CD8-positive, alpha-beta memory T cell (primary cell): ENCODE measurements at regions of chr1 and their contacts with region 1.

Region 1: GRCh38 chr1:15592285-15592684 is 7.4 kb upstream of the AGMAT start:
- DNase-seq: no peak
- H3K4me3 ChIP-seq: no peak overlapping the region
- H3K4me3 Mint-ChIP-seq: no peak overlapping the region
- H3K27ac ChIP-seq: no peak overlapping the region
- H3K27ac Mint-ChIP-seq: no peak overlapping the region
- H3K4me1 ChIP-seq: no peaks in the 10 kb centered on the region
- H3K4me1 Mint-ChIP-seq: peaks cover 0 to 3% (median 0%) of the 10 kb centered on the region in 3 donors
- H3K27me3 ChIP-seq: peaks cover 5% of the 10 kb centered on the region
- H3K27me3 Mint-ChIP-seq: no peaks in the 10 kb centered on the region

Region 2: GRCh38 chr1:15501208-15502032 is 90.9 kb before region 1 on chr1:
- CTCF ChIA-PET with region 1: no interaction called
- POLR2A ChIA-PET with region 1: no interaction called
- DNase-seq: peak in 2 of 5 donors; percentile 16 to 24
- H3K4me3 ChIP-seq: no peak overlapping the region
- H3K4me3 Mint-ChIP-seq: no peak overlapping the region
- H3K27ac ChIP-seq: no peak overlapping the region
- H3K27ac Mint-ChIP-seq: no peak overlapping the region
- H3K4me1 ChIP-seq: no peaks in the 10 kb centered on the region
- H3K4me1 Mint-ChIP-seq: no peaks in the 10 kb centered on the region
- H3K27me3 ChIP-seq: no peaks in the 10 kb centered on the region
- H3K27me3 Mint-ChIP-seq: no peaks in the 10 kb centered on the region

Region 3: DNA sequence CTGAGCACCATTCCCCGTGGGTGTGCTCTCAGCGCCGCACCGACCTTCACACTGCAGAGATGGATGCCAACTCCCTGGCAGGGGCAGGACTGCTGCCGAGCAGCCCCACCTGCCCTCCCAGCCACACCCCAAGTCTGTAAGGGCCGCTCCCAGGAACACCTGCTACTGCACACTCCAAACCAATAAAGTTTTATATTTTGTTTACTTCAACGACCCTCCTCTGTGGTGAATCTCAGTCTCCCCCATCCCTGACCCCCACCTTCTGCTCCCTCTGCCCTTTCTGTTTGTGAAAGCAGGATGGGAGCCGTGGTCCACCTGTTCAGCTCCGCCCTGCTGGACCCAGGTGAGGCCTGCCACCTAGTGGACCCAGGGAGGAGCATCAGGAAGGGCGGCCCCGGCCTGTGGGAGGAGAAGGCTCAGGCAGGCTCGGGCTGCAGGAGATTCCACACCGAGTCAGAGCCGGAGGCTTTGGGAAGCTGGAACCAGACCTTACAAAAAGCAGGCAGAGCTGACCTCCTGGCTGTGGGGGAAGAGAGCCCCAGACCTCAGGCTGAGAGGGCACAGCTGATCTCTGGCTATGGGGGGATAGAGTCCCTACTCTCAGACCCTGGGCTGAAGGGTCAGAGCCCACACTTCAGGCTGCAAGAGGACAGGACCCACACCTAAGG is 149.0 kb after region 1 on chr1:
- CTCF ChIA-PET with region 1: interaction called, 23 read pairs
- POLR2A ChIA-PET with region 1: no interaction called
- DNase-seq: peak; percentile 19 to 75 (median 42)
- H3K4me3 ChIP-seq: no peak overlapping the region
- H3K4me3 Mint-ChIP-seq: no peak overlapping the region
- H3K27ac ChIP-seq: no peak overlapping the region
- H3K27ac Mint-ChIP-seq: peak overlapping the region in 1 of 8 donors; percentile 23
- H3K4me1 ChIP-seq: peaks cover 5% of the 10 kb centered on the region
- H3K4me1 Mint-ChIP-seq: peaks cover 3 to 6% (median 6%) of the 10 kb centered on the region in 3 donors
- H3K27me3 ChIP-seq: no peaks in the 10 kb centered on the region
- H3K27me3 Mint-ChIP-seq: no peaks in the 10 kb centered on the region

Region 4: DNA sequence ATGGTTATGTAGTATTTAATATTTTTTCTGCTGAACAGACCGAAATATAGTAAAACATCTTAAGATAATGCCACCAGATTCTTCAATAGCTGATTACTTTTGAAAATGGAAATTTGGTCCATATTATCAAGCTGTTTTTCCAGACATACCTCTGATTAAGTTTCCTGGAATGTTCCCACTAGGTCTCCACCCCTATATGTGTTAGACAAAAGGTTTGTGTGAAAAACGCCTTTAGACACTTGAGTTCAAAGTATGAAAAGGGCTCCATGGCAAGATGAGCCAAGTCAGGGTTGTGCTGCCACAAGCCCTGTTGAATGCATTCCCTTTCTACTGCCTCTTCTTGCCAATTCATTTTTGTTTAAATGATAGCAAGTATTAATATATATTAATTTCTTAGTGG is 331.0 kb after region 1 on chr1:
- CTCF ChIA-PET with region 1: no interaction called
- POLR2A ChIA-PET with region 1: interaction called, 14 read pairs
- DNase-seq: no peak
- H3K4me3 ChIP-seq: no peak overlapping the region
- H3K4me3 Mint-ChIP-seq: no peak overlapping the region
- H3K27ac ChIP-seq: no peak overlapping the region
- H3K27ac Mint-ChIP-seq: peak overlapping the region in 1 of 8 donors; percentile 38
- H3K4me1 ChIP-seq: peaks cover 10% of the 10 kb centered on the region
- H3K4me1 Mint-ChIP-seq: peaks cover 13 to 14% (median 14%) of the 10 kb centered on the region in 3 donors
- H3K27me3 ChIP-seq: no peaks in the 10 kb centered on the region
- H3K27me3 Mint-ChIP-seq: no peaks in the 10 kb centered on the region